Naive thymus-derived CD4-positive, alpha-beta T cell (primary cell): ENCODE measurements at regions of chr2 and their contacts with region 1.

Region 1: GRCh38 chr2:60840880-60841279 is 40.5 kb upstream of the REL start:
- DNase-seq: peak in 3 of 9 donors; percentile 4 to 12 (median 12)
- ATAC-seq: peak; percentile 65
- H3K4me3 ChIP-seq: no peak overlapping the region
- H3K4me3 Mint-ChIP-seq: peak overlapping the region in 5 of 10 donors; percentile 11 to 57 (median 36)
- H3K27ac ChIP-seq: no peak overlapping the region
- H3K27ac Mint-ChIP-seq: peak overlapping the region in 6 of 9 donors; percentile 30 to 73 (median 57)
- H3K4me1 ChIP-seq: peaks cover 10% of the 10 kb centered on the region in 2 donors
- H3K4me1 Mint-ChIP-seq: peaks cover 10 to 23% (median 12%) of the 10 kb centered on the region in 7 donors
- H3K27me3 ChIP-seq: no peaks in the 10 kb centered on the region
- H3K27me3 Mint-ChIP-seq: no peaks in the 10 kb centered on the region

Region 2: DNA sequence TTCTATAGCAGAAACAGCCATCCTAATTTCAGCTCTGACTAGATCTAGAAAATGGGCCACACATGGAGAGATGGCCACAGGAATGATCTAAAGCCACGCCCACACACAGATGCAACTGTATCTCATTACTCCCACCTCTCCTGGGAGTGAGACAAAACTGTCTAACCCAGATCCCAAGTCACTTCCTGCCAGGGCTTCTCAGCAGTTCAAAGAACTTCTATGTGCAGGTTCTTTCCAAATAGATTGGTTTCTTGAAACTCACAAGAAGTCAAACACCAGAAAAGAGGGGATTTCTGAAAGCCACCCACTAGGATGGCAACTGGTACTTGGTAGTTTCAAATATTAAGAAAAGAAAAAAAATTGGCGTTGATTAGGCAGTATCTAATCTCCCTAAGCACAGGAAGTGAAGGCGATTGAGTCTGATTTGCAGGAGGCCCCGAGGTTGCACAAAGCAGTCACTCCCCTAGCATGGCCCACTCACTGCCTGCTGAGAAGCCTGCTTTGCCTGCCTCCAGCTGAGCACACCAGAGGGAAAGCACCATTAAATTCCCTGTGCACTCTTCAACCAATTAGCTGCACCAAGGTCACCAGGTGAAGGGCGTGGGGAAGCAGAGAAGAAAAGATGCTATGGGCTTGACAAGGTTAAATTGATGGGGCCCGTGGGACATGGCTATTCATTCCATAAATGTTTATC is 33.7 kb before region 1 on chr2:
- CTCF ChIA-PET with region 1: no interaction called
- POLR2A ChIA-PET with region 1: no interaction called
- intact Hi-C with region 1: loop called in 1 of 2 experiments (anchors 5 kb)
- DNase-seq: peak in 5 of 9 donors; percentile 15 to 53 (median 20)
- ATAC-seq: peak; percentile 65
- H3K4me3 ChIP-seq: no peak overlapping the region
- H3K4me3 Mint-ChIP-seq: peak overlapping the region; percentile 15 to 73 (median 52)
- H3K27ac ChIP-seq: peak overlapping the region; percentile 57
- H3K27ac Mint-ChIP-seq: peak overlapping the region; percentile 7 to 88 (median 73)
- H3K4me1 ChIP-seq: peaks cover 19 to 23% of the 10 kb centered on the region in 2 donors
- H3K4me1 Mint-ChIP-seq: peaks cover 28 to 51% (median 44%) of the 10 kb centered on the region in 7 donors
- H3K27me3 ChIP-seq: no peaks in the 10 kb centered on the region
- H3K27me3 Mint-ChIP-seq: no peaks in the 10 kb centered on the region